HEK293T (cell line): ENCODE measurements at regions of chr1 and their contacts with region 1.

Region 1: DNA sequence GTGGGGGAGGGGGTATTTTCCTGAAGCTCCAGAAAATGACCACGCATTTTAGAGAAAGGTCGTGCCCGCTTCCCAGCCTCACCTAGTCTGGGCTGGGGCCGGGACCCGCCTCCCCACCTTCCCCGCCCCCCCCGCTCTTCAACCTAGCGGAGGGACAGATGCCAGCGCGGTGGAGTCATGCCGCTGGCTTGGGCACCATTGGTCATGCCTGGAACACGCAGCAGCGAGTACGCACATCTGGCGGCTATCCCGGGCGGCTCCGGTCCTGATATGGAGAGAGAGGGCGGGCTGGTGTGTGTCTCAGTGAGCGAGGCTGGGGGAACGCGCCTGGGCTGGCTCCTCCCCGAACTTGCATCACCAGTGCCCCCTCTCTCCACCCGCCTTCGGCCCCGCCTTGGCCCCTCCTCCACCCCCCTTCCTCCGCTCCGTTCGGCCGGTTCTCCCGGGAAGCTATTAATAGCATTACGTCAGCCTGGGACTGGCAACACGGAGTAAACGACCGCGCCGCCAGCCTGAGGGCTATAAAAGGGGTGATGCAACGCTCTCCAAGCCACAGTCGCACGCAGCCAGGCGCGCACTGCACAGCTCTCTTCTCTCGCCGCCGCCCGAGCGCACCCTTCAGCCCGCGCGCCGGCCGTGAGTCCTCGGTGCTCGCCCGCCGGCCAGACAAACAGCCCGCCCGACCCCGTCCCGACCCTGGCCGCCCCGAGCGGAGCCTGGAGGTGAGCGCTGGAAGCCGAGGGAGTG is at the start of gene ATF3:
- DNase-seq: peak; percentile 100

Region 2: DNA sequence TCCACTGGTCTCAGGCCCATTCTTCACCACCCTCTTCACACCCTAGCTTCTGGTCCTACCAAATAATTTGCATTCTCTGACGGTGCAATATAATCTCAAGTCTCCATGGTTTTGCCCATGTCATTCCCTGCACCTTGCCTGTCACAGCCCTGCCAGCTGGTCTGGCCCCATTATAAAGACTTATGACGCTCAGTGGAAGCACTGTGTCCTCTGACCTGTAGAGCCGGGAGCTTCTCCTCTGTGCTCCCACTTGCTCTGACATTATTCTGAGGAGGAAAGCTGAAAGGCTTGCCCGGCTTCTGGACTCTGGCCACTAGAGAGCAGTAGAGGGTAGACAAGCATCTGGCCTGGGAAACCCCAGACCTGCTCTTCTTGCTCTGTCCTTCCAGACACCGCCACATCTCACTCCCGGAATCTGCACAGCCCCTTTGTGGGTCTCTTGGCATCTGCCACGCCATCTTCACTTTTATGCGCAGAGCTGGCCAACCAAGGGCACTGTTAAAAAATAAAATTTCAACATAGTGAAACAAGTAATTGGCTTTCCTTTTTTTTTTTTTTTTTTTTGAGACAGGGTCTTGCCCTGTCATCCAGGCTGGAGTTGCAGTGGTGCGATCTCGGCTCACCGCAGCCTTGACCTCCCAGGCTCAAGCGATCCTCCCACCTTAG is 131.2 kb before region 1 on chr1:
- CTCF ChIA-PET with region 1: interaction called, 8 read pairs
- POLR2A ChIA-PET with region 1: interaction called, 51 read pairs
- DNase-seq: peak; percentile 97

Region 3: DNA sequence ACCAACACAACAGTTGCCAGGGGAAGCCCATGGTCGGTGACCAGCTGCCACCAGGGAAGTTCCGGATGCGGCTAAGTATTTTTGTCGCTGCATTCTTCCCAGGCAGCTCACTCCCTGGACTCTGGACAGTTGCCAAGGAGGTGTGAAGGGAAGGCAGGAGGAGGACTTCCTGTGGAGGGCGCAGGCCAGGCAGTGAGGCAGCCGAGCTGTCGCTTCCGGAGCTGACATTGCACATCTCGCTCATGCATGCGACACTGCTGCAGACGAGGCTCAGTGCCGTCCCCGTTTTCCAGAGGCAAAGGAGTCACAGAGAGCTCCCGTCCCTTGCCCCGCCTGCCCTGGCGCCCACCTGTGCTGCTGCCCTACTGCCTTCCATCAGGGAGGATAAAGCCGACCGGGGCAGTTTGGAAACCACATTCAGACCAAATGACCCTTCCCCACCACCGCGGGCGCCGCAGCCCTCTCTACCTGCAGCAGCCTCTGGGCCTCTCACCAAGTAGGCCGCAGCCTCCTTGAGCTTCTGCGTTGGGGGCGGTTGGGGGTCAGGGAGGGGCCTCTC is 94.2 kb before region 1 on chr1:
- CTCF ChIA-PET with region 1: no interaction called
- POLR2A ChIA-PET with region 1: interaction called, 11 read pairs
- DNase-seq: no peak

Region 4: DNA sequence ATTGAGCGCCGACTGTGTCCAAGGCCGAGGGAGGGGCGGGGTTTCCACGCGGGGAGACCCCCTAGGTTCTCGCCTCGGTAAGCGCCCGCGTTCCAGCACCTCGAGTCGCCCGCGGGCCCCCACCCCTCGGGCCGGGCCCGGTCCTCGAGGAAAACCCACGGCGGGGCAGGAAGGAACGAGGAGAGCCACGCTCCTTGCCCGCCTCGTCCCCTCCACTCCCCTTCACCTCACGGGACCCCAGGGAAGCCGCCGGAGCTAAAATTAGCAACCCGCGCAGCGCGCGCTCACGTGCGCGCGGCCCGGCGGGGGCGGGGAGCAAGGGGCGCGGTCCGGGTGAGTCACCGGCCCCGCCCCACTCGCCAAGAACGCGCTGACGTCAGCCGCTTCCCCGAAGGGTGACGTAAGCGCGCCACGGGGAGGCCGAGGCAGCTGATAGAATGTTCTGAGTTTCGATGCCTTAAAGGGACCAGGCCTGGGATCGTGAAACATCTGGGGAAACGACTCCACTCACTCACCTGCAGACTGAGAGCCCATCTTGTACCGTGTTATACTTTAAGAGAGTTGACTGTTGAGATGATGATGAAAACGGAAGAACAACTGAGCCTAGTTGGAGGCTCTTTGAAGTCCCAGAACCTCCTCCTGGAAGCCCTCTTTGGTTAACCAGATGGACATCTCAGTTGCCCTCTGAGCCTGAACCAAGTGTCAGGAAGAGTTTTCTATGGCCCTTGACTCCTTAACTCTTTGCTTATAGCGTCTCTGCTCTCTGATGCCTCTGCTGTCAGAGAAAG is 49.5 kb before region 1 on chr1:
- CTCF ChIA-PET with region 1: no interaction called
- POLR2A ChIA-PET with region 1: interaction called, 32 read pairs
- DNase-seq: peak; percentile 99

Region 5: GRCh38 chr1:212586206-212587015 is 22.0 kb before region 1 on chr1:
- CTCF ChIA-PET with region 1: interaction called, 3 read pairs
- POLR2A ChIA-PET with region 1: interaction called, 35 read pairs
- DNase-seq: no peak

Region 6: DNA sequence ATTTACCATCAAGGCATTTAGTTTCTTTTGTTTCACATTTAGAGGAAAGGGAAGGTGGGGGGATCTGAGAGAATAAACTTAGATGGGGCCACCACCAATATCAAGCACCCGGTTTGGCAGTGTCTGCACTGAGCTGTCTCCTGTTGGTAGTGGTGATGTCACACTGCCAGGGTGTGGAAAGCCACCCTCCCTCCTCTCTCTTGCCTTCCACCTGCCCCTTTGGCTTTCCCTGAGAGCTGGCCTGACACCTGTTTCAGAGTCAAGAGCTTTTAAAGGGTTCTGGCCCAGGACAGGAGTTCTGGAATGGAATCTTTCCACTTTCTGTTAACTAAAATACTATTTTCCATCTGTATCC is 13.5 kb after region 1 on chr1:
- CTCF ChIA-PET with region 1: no interaction called
- POLR2A ChIA-PET with region 1: interaction called, 29 read pairs
- DNase-seq: no peak

Region 7: GRCh38 chr1:212760126-212760823 is 151.9 kb after region 1 on chr1:
- CTCF ChIA-PET with region 1: no interaction called
- POLR2A ChIA-PET with region 1: no interaction called
- DNase-seq: peak; percentile 57